Activated CD8-positive, alpha-beta T cell treated with anti-CD3 and anti-CD28 coated beads for 36 hours (primary cell): ENCODE measurements at regions of chr16 and their contacts with region 1.

Region 1: GRCh38 chr16:65704866-65705265 is 583.0 kb upstream of the CDH11 start:
- DNase-seq: no peak
- ATAC-seq: no peak
- H3K4me3 Mint-ChIP-seq: no peak overlapping the region
- H3K27ac Mint-ChIP-seq: no peak overlapping the region
- H3K4me1 Mint-ChIP-seq: no peaks in the 10 kb centered on the region
- H3K27me3 Mint-ChIP-seq: no peaks in the 10 kb centered on the region
- CTCF ChIP-seq: no peak

Region 2: GRCh38 chr16:66266436-66267291 is 561.8 kb after region 1 on chr16:
- CTCF ChIA-PET with region 1: no interaction called
- POLR2A ChIA-PET with region 1: no interaction called
- intact Hi-C with region 1: loop called (anchors 10 kb)
- DNase-seq: no peak
- ATAC-seq: no peak
- H3K4me3 Mint-ChIP-seq: no peak overlapping the region
- H3K27ac Mint-ChIP-seq: no peak overlapping the region
- H3K4me1 Mint-ChIP-seq: peaks cover 4% of the 10 kb centered on the region
- H3K27me3 Mint-ChIP-seq: peaks cover 20% of the 10 kb centered on the region
- CTCF ChIP-seq: no peak